ENCODE measurements at regions of chr5 and their contacts with region 1.

Region 1: GRCh38 chr5:3217771-3218500 is 377.7 kb upstream of the IRX1 start:
- DNase-seq: no peak
- H3K4me3 ChIP-seq: no peak overlapping the region
- CTCF ChIP-seq: no peak

Region 2: GRCh38 chr5:3261081-3261480 is 43.1 kb after region 1 on chr5:
- in situ Hi-C with region 1: loop called (anchors 5 kb)
- DNase-seq: no peak
- H3K4me3 ChIP-seq: no peak overlapping the region
- CTCF ChIP-seq: no peak

Measured in astrocyte of the cerebellum (primary cell).